ENCODE measurements at regions of chr1 and their contacts with region 1.

Region 1: DNA sequence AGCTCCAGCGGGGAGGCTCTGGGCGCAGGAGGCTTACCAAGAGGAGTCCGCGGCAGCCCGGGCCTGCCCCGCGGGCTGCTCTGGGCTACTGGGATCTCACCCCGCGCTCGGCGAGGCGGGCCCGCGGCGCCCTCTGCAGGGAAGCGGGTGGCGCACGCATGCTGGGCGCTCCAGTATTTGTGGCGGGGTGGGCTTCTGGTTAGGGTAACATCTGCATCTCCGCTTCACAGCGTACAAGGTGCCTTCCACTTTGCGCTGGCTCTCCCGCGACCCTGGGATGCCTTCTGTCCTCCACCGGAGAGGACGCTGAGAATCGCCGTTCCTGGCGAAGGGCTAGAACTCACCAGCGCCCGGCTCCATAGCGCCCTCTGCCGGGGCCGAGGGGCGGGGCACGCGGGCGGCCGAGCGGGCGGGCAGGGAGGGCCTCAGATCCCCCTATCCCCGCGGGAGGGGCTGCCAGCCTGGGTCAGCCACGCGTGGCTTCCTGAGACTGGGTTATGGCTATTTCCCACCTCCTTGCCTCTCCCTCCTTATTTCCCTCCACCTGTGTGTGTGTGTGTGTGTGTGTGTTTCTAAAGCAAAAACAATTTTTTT is 46.6 kb upstream of the CTBS start:
- DNase-seq: no peak
- H3K4me3 ChIP-seq: peak overlapping the region; percentile 69
- CTCF ChIP-seq: peak; percentile 79

Region 2: GRCh38 chr1:84048820-84049219 is 572.0 kb before region 1 on chr1:
- CTCF ChIA-PET with region 1: no interaction called
- POLR2A ChIA-PET with region 1: no interaction called
- DNase-seq: no peak
- H3K4me3 ChIP-seq: no peak overlapping the region
- CTCF ChIP-seq: no peak

Region 3: DNA sequence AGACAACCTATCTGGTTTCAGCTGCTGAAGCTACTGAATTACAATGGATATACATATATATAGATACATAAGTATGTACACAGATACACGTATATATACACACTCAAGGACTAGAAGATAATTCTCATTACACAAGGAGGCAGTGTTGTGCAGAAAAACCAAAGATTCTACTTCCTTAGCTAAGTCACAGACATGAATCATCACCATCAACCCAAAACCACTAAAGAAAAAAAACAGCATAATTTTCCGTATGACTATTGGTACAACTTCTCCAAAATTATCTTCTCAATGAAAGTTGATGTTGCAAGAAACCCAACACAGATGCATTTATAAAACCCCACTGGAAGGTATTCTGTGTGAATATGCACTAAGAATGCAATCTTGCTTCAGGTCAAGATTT is 178.6 kb before region 1 on chr1:
- CTCF ChIA-PET with region 1: interaction called, 12 read pairs
- POLR2A ChIA-PET with region 1: no interaction called
- DNase-seq: peak; percentile 82
- H3K4me3 ChIP-seq: no peak overlapping the region
- CTCF ChIP-seq: peak; percentile 54

Region 4: DNA sequence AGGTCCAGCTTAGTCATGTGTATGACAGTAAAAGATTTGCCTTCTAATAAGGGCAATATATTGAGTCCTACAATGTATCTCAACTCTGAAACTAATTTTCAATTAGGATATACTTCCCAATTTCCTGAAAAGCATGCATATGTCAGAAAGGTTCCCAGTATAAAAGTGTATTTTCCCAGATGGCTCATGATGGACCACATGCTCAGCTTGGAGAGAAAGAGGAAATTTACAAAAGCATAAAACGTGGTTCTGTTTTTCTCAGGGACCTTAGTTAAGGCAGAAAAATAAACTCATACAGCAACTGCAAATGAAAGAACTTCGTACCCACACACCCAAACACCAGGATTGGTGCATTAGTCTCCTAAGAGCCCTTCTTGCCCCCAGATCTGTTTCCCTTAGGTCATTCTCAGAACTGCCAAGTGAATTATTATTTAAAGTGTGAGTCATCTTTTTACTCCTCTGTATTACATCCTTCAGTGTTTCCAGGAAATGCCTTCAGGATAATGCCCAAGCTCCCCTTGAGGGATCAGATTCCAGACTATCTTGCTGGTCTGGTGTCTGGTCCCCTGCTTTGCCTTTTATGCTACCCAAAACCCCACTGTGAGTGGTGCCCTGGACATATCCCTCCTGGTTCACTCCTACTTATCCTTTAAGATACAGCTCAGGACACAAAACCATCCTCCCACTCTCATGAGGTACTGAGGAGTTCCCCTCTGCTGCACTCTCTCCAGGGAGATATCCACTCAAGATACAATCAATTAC is 12.0 kb after region 1 on chr1:
- CTCF ChIA-PET with region 1: interaction called, 52 read pairs
- POLR2A ChIA-PET with region 1: no interaction called
- DNase-seq: no peak
- H3K4me3 ChIP-seq: no peak overlapping the region
- CTCF ChIP-seq: no peak